ENCODE measurements at regions of chr2 and their contacts with region 1.

Region 1: GRCh38 chr2:188291617-188292347 is at the start of gene GULP1:
- DNase-seq: peak; percentile 83
- H3K4me3 ChIP-seq: peak within 1 kb of the TSS; percentile 77 to 84 (median 81)
- H3K27ac ChIP-seq: peak within 1 kb of the TSS; percentile 86
- H3K4me1 ChIP-seq: peaks cover 30% of the 10 kb centered on the region
- H3K27me3 ChIP-seq: no peaks in the 10 kb centered on the region
- CTCF ChIP-seq: peak; percentile 67 to 85
- POLR2A ChIP-seq: no peak
- total RNA-seq, gene GULP1: 43.0 and 53.8 TPM in 2 replicates

Region 2: GRCh38 chr2:186485871-186486650 is 1805.7 kb before region 1 on chr2 and contains the start of gene ZC3H15:
- CTCF ChIA-PET with region 1: no interaction called
- POLR2A ChIA-PET with region 1: no interaction called
- dilution Hi-C with region 1: no loop called
- intact Hi-C with region 1: loop called (anchors 5 kb)
- DNase-seq: peak; percentile 97
- H3K4me3 ChIP-seq: peak within 1 kb of the TSS; percentile 71 to 98 (median 84)
- H3K27ac ChIP-seq: peak within 1 kb of the TSS; percentile 89
- H3K4me1 ChIP-seq: peaks cover 19% of the 10 kb centered on the region
- H3K27me3 ChIP-seq: no peaks in the 10 kb centered on the region
- CTCF ChIP-seq: no peak
- POLR2A ChIP-seq: peak; percentile 95
- total RNA-seq, gene ZC3H15: 64.5 and 65.1 TPM in 2 replicates

Region 3: GRCh38 chr2:187842978-187843847 is 448.6 kb before region 1 on chr2:
- CTCF ChIA-PET with region 1: interaction called, 3 read pairs
- POLR2A ChIA-PET with region 1: no interaction called
- dilution Hi-C with region 1: no loop called
- intact Hi-C with region 1: loop called (anchors 2 kb)
- DNase-seq: peak; percentile 75
- H3K4me3 ChIP-seq: no peak overlapping the region
- H3K27ac ChIP-seq: no peak overlapping the region
- H3K4me1 ChIP-seq: no peaks in the 10 kb centered on the region
- H3K27me3 ChIP-seq: no peaks in the 10 kb centered on the region
- CTCF ChIP-seq: peak; percentile 39 to 43
- POLR2A ChIP-seq: no peak

Region 4: DNA sequence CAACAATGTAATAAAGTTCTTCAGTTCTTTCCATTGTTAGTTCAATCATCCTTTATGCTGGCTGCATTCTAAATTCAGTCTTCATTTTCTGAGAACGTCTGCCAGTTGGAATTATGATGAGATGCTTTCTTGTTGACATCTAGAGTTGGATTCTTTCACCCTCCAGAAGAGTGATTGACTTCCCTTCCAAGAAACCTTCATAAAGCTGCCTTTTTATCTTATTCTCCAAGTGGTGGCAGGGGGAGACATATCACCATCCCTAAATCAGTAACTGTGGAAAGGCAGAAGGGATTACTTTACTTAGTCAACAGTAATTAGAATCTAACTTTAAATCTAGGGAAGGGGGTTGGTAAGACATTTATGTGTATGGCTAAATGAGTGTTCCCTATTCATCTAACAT is 87.0 kb before region 1 on chr2:
- CTCF ChIA-PET with region 1: no interaction called
- POLR2A ChIA-PET with region 1: interaction called, 13 read pairs
- dilution Hi-C with region 1: no loop called
- intact Hi-C with region 1: no loop called
- DNase-seq: no peak
- H3K4me3 ChIP-seq: no peak overlapping the region
- H3K27ac ChIP-seq: no peak overlapping the region
- H3K4me1 ChIP-seq: no peaks in the 10 kb centered on the region
- H3K27me3 ChIP-seq: no peaks in the 10 kb centered on the region
- CTCF ChIP-seq: no peak
- POLR2A ChIP-seq: no peak

Region 5: DNA sequence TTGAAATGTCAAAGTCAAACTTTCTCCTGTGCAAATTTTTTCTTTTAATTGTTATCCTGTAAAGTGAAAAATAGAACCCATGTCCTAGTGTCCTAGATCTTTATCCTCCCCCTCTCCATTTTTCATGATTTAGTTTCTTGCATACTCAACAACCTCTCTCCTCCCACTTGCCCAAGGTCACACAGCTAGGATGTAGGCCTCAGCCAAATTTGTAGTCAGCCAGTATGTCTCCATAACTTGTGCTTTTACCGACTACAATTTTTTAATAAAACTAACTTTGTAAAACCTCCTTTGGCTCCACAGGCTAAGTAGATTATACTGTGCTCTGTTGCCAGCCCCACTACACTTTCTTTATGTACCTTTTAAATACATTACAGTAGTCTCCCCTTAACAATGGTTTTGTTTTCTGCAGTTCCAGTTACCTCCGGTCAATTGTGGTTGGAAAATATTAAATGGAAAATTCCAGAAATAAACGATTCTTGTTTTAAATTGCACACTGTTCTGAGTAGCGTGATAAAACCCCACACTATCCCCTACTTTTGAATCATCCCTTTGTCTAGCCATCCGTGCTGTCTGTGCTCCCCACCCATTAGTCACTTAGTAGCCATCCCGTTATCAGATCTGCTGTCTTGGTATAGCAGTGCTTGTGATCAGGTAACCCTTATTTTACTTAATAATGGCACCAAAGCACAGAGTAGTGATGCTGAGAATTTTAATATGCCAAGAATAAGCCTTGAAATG is 22.7 kb after region 1 on chr2:
- CTCF ChIA-PET with region 1: interaction called, 30 read pairs
- POLR2A ChIA-PET with region 1: interaction called, 4 read pairs
- dilution Hi-C with region 1: no loop called
- intact Hi-C with region 1: loop called (anchors 1 kb)
- DNase-seq: peak; percentile 33
- H3K4me3 ChIP-seq: no peak overlapping the region
- H3K27ac ChIP-seq: peak overlapping the region; percentile 80
- H3K4me1 ChIP-seq: peaks cover 57% of the 10 kb centered on the region
- H3K27me3 ChIP-seq: no peaks in the 10 kb centered on the region
- CTCF ChIP-seq: no peak
- POLR2A ChIP-seq: no peak

Region 6: GRCh38 chr2:188381614-188382013 is 89.8 kb after region 1 on chr2:
- CTCF ChIA-PET with region 1: interaction called, 3 read pairs
- POLR2A ChIA-PET with region 1: no interaction called
- dilution Hi-C with region 1: no loop called
- intact Hi-C with region 1: loop called (anchors 1 kb)
- DNase-seq: peak; percentile 83
- H3K4me3 ChIP-seq: peak overlapping the region in 1 of 3 experiments; percentile 12
- H3K27ac ChIP-seq: peak overlapping the region; percentile 73
- H3K4me1 ChIP-seq: peaks cover 28% of the 10 kb centered on the region
- H3K27me3 ChIP-seq: no peaks in the 10 kb centered on the region
- CTCF ChIP-seq: no peak
- POLR2A ChIP-seq: no peak